Activated CD4-positive, alpha-beta memory T cell treated with anti-CD3 and anti-CD28 coated beads for 36 hours (primary cell): ENCODE measurements at regions of chr13 and their contacts with region 1.

Region 1: DNA sequence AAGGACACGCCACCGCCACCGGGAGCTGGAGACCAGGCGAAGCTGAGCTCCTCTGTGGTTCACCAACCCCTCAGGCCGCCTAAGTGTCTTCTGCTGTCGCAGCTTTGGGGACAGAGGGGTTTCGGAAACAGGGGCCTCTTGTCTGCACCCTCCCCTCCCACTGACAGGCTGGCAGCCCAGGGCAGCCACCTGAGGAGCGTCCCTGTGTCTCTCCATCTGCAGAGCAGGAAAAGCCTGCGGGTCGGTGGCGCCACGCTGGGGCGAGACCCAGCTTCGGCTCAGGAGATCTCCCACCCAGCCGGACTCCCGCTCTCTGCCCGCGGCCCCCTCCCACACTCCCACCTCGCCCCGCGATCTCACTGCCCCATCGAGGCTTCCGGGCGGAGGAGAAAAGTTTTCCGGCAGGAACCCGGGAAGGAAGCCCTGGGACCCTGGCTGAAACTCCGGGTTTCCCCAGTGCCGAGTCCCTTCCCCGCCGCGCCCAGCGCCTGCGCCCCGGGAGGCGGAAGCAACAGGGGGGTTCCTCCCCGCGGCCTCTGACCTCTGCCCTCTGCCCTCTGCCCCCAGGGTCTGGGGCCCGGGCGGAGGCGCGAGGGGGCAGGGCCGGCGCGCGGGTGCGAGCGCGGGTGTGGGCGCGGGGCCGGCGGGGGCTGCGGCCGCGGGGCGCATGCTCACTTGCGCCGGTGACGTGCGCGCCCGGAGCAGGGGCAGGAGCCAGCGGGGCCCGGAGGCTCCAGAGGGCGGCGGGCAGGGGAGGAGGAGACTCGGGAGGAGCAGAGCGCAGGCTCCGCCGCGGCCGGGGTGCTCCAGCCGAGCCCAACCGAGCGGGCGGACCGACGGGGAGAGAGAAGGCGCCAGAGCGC is at the start of gene ATP11A:
- DNase-seq: peak; percentile 88
- H3K4me3 Mint-ChIP-seq: peak within 1 kb of the TSS; percentile 81
- H3K27ac Mint-ChIP-seq: peak within 1 kb of the TSS; percentile 87
- H3K4me1 Mint-ChIP-seq: peaks cover 48% of the 10 kb centered on the region
- H3K27me3 Mint-ChIP-seq: no peaks in the 10 kb centered on the region
- total RNA-seq, gene ATP11A: 36.6 to 38.7 TPM

Region 2: DNA sequence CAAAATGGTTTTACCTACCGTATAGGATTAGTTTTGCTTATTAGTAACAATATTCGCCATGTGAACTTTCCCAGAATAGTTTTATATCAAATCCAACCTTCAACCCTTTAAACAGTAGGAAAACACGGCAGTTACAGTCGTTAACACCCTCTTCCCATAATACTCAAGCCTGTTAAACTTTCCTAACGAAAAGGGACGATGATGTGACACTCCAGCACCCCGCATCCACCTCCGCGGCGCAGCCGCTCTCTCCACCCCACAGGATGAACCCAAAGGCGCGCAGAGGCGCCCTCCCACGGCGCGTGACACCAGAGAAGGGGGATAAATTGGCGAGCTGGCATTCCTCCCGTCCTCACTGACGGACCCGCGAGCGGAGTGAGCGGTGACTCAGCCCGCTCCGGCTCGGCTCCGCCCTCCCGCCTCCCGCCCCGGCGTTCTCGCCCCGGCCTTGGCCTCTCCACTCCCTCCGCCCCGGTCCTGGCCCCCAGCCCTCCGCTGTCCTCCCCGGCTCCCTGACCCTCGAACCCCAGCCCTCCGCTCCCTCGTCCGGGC is 102.2 kb before region 1 on chr13:
- CTCF ChIA-PET with region 1: no interaction called
- POLR2A ChIA-PET with region 1: interaction called, 6 read pairs
- intact Hi-C with region 1: loop called (anchors 5 kb)
- DNase-seq: peak; percentile 85
- H3K4me3 Mint-ChIP-seq: peak overlapping the region; percentile 92
- H3K27ac Mint-ChIP-seq: peak overlapping the region; percentile 91
- H3K4me1 Mint-ChIP-seq: peaks cover 48% of the 10 kb centered on the region
- H3K27me3 Mint-ChIP-seq: no peaks in the 10 kb centered on the region

Region 3: GRCh38 chr13:112638157-112638750 is 51.3 kb before region 1 on chr13:
- CTCF ChIA-PET with region 1: interaction called, 13 read pairs
- POLR2A ChIA-PET with region 1: no interaction called
- intact Hi-C with region 1: loop called (anchors 2 kb)
- DNase-seq: no peak
- H3K4me3 Mint-ChIP-seq: no peak overlapping the region
- H3K27ac Mint-ChIP-seq: no peak overlapping the region
- H3K4me1 Mint-ChIP-seq: peaks cover 5% of the 10 kb centered on the region
- H3K27me3 Mint-ChIP-seq: peaks cover 25% of the 10 kb centered on the region

Region 4: GRCh38 chr13:112651311-112651710 is 38.2 kb before region 1 on chr13:
- CTCF ChIA-PET with region 1: no interaction called
- POLR2A ChIA-PET with region 1: no interaction called
- intact Hi-C with region 1: no loop called
- DNase-seq: no peak
- H3K4me3 Mint-ChIP-seq: no peak overlapping the region
- H3K27ac Mint-ChIP-seq: no peak overlapping the region
- H3K4me1 Mint-ChIP-seq: no peaks in the 10 kb centered on the region
- H3K27me3 Mint-ChIP-seq: no peaks in the 10 kb centered on the region

Region 5: DNA sequence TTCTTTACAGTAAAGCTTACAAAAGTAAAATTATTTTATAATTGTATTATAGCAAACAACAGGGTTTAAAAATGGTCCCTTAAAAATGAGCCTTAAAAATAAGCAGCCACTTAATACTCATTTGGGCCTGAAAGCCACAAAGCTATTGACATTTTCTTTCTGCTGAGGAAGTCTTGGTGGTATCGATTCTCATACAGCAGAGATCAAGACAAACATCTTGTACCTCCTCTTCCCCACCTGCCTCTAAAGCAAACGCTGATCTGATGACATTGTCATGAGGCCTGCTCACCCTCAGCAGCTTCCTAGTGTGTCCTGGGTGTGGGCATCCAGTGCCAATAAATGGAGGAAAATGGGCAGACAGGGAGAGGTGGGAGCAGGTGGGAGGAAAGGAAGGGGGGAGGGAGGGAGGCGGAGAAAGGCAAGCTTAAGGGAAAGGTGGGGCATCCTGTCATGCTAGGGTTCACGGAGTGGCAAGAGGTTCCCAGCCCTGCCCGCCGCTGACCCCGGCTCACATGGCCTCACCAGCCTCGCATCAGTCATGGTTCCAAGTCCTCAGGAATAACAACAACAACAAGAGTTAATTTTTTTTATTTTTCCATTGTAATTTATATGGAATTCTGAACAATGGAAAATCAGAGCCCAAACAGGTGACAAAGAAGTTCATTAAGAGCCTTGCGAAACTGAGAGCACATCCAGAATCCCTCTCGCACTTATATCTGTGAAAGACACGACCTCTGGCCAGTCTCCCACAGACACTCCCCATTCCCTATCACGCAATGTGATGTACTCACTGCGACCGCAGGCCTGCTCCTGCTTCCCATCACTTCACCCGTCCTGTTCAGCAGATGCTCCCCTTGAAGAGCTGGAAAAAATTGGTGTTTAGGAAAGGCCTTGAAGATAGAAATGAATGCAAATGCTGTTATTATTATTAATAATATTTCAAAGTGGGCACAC is 14.8 kb before region 1 on chr13:
- CTCF ChIA-PET with region 1: no interaction called
- POLR2A ChIA-PET with region 1: interaction called, 3 read pairs
- intact Hi-C with region 1: loop called (anchors 1 kb)
- DNase-seq: peak; percentile 11
- H3K4me3 Mint-ChIP-seq: no peak overlapping the region
- H3K27ac Mint-ChIP-seq: no peak overlapping the region
- H3K4me1 Mint-ChIP-seq: peaks cover 17% of the 10 kb centered on the region
- H3K27me3 Mint-ChIP-seq: no peaks in the 10 kb centered on the region

Region 6: GRCh38 chr13:112873851-112874750 is 184.6 kb after region 1 on chr13:
- CTCF ChIA-PET with region 1: interaction called, 3 read pairs
- POLR2A ChIA-PET with region 1: no interaction called
- intact Hi-C with region 1: loop called (anchors 1 kb)
- DNase-seq: peak; percentile 82
- H3K4me3 Mint-ChIP-seq: no peak overlapping the region
- H3K27ac Mint-ChIP-seq: peak overlapping the region; percentile 72
- H3K4me1 Mint-ChIP-seq: peaks cover 20% of the 10 kb centered on the region
- H3K27me3 Mint-ChIP-seq: no peaks in the 10 kb centered on the region